CD14-positive monocyte (primary cell): ENCODE measurements at regions of chr3 and their contacts with region 1.

Region 1: GRCh38 chr3:38479431-38480092 is 16.6 kb upstream of the EXOG start:
- DNase-seq: peak; percentile 40 to 55 (median 55)
- H3K4me3 ChIP-seq: no peak overlapping the region
- H3K4me3 Mint-ChIP-seq: no peak overlapping the region
- H3K27ac ChIP-seq: no peak overlapping the region
- H3K27ac Mint-ChIP-seq: peak overlapping the region in 1 of 7 donors; percentile 15
- H3K4me1 ChIP-seq: no peaks in the 10 kb centered on the region
- H3K4me1 Mint-ChIP-seq: no peaks in the 10 kb centered on the region
- H3K27me3 ChIP-seq: no peaks in the 10 kb centered on the region
- H3K27me3 Mint-ChIP-seq: no peaks in the 10 kb centered on the region
- CTCF ChIP-seq: peak; percentile 81

Region 2: GRCh38 chr3:37855363-37855970 is 624.1 kb before region 1 on chr3:
- intact Hi-C with region 1: loop called in 1 of 2 experiments (anchors 10 kb)
- DNase-seq: peak; percentile 68 to 76 (median 74)
- H3K4me3 ChIP-seq: no peak overlapping the region
- H3K4me3 Mint-ChIP-seq: no peak overlapping the region
- H3K27ac ChIP-seq: no peak overlapping the region
- H3K27ac Mint-ChIP-seq: peak overlapping the region in 1 of 7 donors; percentile 66
- H3K4me1 ChIP-seq: peaks cover 5 to 8% of the 10 kb centered on the region in 2 donors
- H3K4me1 Mint-ChIP-seq: peaks cover 6% of the 10 kb centered on the region
- H3K27me3 ChIP-seq: no peaks in the 10 kb centered on the region
- H3K27me3 Mint-ChIP-seq: peaks cover 0 to 4% (median 3%) of the 10 kb centered on the region in 3 donors
- CTCF ChIP-seq: peak; percentile 97

Region 3: GRCh38 chr3:38117748-38118420 is 361.7 kb before region 1 on chr3:
- intact Hi-C with region 1: loop called (anchors 5 kb)
- DNase-seq: peak; percentile 58 to 76 (median 66)
- H3K4me3 ChIP-seq: no peak overlapping the region
- H3K4me3 Mint-ChIP-seq: no peak overlapping the region
- H3K27ac ChIP-seq: no peak overlapping the region
- H3K27ac Mint-ChIP-seq: peak overlapping the region in 2 of 7 donors; percentile 48 to 68
- H3K4me1 ChIP-seq: peaks cover 0 to 5% of the 10 kb centered on the region in 2 donors
- H3K4me1 Mint-ChIP-seq: peaks cover 14% of the 10 kb centered on the region
- H3K27me3 ChIP-seq: no peaks in the 10 kb centered on the region
- H3K27me3 Mint-ChIP-seq: peaks cover 3 to 10% (median 4%) of the 10 kb centered on the region in 3 donors
- CTCF ChIP-seq: peak; percentile 71

Region 4: DNA sequence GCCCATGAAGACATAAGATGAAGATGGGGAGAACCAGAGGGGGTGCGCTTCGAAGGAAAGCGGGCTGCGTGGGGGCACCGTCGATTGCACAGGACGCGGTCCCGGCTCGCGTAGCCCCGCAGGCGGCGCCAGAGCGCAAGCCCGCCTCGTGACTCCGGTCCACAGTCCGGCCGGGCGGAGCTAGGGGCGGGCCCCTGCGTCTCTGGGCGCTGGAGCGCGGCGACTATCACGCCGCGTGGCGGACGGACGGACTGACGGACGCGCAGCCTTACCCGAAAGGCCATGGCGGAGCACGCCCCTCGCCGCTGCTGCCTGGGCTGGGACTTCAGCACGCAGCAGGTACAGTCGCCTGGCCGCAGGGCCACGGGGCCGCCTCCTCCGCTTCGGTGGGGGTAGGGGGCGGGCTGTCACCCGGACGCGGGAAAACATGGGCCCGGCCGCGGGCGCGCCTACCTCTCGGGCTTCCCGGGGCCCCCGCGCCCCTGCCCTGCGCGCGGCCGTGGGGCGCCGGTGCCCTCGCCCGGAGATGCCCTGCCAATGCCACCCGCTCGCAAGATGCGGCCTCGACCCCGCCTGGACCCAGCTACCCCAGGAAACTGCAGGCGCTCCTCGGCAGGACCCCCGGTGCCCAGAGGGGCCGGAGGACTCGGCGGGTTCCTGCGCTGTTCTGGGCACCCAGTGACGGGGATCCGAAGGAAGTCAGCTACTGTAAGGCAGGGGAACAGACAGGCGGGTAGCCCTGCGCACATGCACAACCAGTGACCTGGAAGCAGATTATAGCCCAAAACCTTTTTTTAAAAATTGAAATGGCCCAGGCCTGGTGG is 132.8 kb before region 1 on chr3 and contains the start of gene XYLB:
- intact Hi-C with region 1: loop called in 1 of 2 experiments (anchors 2 kb)
- DNase-seq: peak; percentile 75 to 82 (median 77)
- H3K4me3 ChIP-seq: peak within 1 kb of the TSS; percentile 32 to 78 (median 47)
- H3K4me3 Mint-ChIP-seq: peak within 1 kb of the TSS; percentile 75 to 82
- H3K27ac ChIP-seq: peak within 1 kb of the TSS in 1 of 2 donors; percentile 8
- H3K27ac Mint-ChIP-seq: peak within 1 kb of the TSS in 4 of 7 donors; percentile 9 to 75 (median 41)
- H3K4me1 ChIP-seq: peaks cover 17 to 26% of the 10 kb centered on the region in 2 donors
- H3K4me1 Mint-ChIP-seq: peaks cover 12% of the 10 kb centered on the region
- H3K27me3 ChIP-seq: no peaks in the 10 kb centered on the region
- H3K27me3 Mint-ChIP-seq: peaks cover 0 to 3% (median 1%) of the 10 kb centered on the region in 3 donors
- CTCF ChIP-seq: peak; percentile 85
- polyA plus RNA-seq, gene XYLB: 0.60 to 1.00 (median 0.74) TPM

Region 5: GRCh38 chr3:38793721-38794120 is 314.2 kb after region 1 on chr3:
- intact Hi-C with region 1: no loop called
- DNase-seq: no peak
- H3K4me3 ChIP-seq: no peak overlapping the region
- H3K4me3 Mint-ChIP-seq: no peak overlapping the region
- H3K27ac ChIP-seq: no peak overlapping the region
- H3K27ac Mint-ChIP-seq: no peak overlapping the region
- H3K4me1 ChIP-seq: no peaks in the 10 kb centered on the region
- H3K4me1 Mint-ChIP-seq: no peaks in the 10 kb centered on the region
- H3K27me3 ChIP-seq: no peaks in the 10 kb centered on the region
- H3K27me3 Mint-ChIP-seq: peaks cover 0 to 7% (median 2%) of the 10 kb centered on the region in 3 donors
- CTCF ChIP-seq: no peak